Naive thymus-derived CD4-positive, alpha-beta T cell (primary cell): ENCODE measurements at regions of chr13 and their contacts with region 1.

Region 1: DNA sequence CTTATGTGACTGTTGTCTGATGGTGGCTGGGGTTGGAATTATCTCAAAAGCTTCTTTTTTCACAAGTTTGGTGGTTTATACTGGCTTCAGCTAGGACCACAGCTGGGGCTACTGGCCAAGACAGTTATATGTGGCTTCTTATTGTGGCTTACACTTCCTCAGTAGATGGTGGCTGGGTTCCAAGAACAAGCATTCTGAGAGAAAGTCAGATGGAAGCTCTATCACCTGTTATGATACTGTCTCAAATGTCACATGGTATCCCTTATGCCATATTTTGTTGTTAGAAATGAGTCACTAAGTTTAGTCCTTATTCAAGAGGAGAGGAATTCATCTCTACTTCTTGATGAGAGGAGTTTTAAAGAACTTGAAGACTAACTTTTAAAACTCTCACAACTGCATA is 41.6 kb downstream of the NDFIP2 start:
- DNase-seq: peak in 1 of 9 donors; percentile 40
- ATAC-seq: peak; percentile 74
- H3K4me3 ChIP-seq: no peak overlapping the region
- H3K4me3 Mint-ChIP-seq: peak overlapping the region in 1 of 10 donors; percentile 84
- H3K27ac ChIP-seq: no peak overlapping the region
- H3K27ac Mint-ChIP-seq: peak overlapping the region in 1 of 9 donors; percentile 91
- H3K4me1 ChIP-seq: peaks cover 0 to 7% of the 10 kb centered on the region in 2 donors
- H3K4me1 Mint-ChIP-seq: peaks cover 0 to 41% (median 13%) of the 10 kb centered on the region in 7 donors
- H3K27me3 ChIP-seq: no peaks in the 10 kb centered on the region
- H3K27me3 Mint-ChIP-seq: no peaks in the 10 kb centered on the region

Region 2: DNA sequence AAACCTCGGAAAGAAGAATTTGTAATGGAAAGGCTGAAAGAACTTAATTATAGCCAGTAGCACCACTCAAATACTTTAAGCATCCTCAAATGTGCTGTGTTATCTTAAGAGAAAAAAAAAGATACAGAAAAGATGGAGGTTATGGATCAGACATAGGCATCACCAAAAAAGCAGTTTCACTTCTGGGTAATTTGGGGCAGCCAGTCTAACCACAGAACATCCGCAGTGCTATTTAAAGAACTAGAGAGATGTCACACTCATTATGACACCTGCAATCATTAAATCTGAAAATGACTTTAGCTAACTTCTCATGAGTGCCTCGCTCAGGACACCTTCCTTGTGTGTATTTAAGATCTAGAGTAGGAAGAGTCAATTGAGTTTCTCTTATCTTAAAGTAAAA is 328.3 kb before region 1 on chr13:
- CTCF ChIA-PET with region 1: no interaction called
- POLR2A ChIA-PET with region 1: no interaction called
- intact Hi-C with region 1: loop called in 1 of 2 experiments (anchors 10 kb)
- DNase-seq: peak in 8 of 9 donors; percentile 14 to 59 (median 46)
- ATAC-seq: peak; percentile 89
- H3K4me3 ChIP-seq: no peak overlapping the region
- H3K4me3 Mint-ChIP-seq: peak overlapping the region in 2 of 10 donors; percentile 21 to 61
- H3K27ac ChIP-seq: no peak overlapping the region
- H3K27ac Mint-ChIP-seq: peak overlapping the region in 1 of 9 donors; percentile 24
- H3K4me1 ChIP-seq: peaks cover 9 to 11% of the 10 kb centered on the region in 2 donors
- H3K4me1 Mint-ChIP-seq: peaks cover 6 to 53% (median 21%) of the 10 kb centered on the region in 7 donors
- H3K27me3 ChIP-seq: no peaks in the 10 kb centered on the region
- H3K27me3 Mint-ChIP-seq: peaks cover 0 to 21% (median 0%) of the 10 kb centered on the region in 5 donors

Region 3: GRCh38 chr13:79491715-79492114 is 30.9 kb before region 1 on chr13:
- CTCF ChIA-PET with region 1: no interaction called
- POLR2A ChIA-PET with region 1: no interaction called
- intact Hi-C with region 1: loop called in 1 of 2 experiments (anchors 2 kb)
- DNase-seq: no peak
- ATAC-seq: no peak
- H3K4me3 ChIP-seq: no peak overlapping the region
- H3K4me3 Mint-ChIP-seq: peak overlapping the region in 8 of 10 donors; percentile 58 to 86 (median 68)
- H3K27ac ChIP-seq: no peak overlapping the region
- H3K27ac Mint-ChIP-seq: peak overlapping the region in 8 of 9 donors; percentile 2 to 93 (median 27)
- H3K4me1 ChIP-seq: peaks cover 0 to 17% of the 10 kb centered on the region in 2 donors
- H3K4me1 Mint-ChIP-seq: peaks cover 28 to 87% (median 78%) of the 10 kb centered on the region in 7 donors
- H3K27me3 ChIP-seq: no peaks in the 10 kb centered on the region
- H3K27me3 Mint-ChIP-seq: no peaks in the 10 kb centered on the region